ENCODE measurements at regions of chr2 and their contacts with region 1.

Region 1: GRCh38 chr2:43484323-43484930 is 111.4 kb downstream of the THADA start:
- DNase-seq: no peak
- CTCF ChIP-seq: peak; percentile 52

Region 2: GRCh38 chr2:42974721-42975717 is 509.4 kb before region 1 on chr2:
- in situ Hi-C with region 1: loop called (anchors 10 kb)
- DNase-seq: peak; percentile 53
- CTCF ChIP-seq: peak; percentile 86

Region 3: DNA sequence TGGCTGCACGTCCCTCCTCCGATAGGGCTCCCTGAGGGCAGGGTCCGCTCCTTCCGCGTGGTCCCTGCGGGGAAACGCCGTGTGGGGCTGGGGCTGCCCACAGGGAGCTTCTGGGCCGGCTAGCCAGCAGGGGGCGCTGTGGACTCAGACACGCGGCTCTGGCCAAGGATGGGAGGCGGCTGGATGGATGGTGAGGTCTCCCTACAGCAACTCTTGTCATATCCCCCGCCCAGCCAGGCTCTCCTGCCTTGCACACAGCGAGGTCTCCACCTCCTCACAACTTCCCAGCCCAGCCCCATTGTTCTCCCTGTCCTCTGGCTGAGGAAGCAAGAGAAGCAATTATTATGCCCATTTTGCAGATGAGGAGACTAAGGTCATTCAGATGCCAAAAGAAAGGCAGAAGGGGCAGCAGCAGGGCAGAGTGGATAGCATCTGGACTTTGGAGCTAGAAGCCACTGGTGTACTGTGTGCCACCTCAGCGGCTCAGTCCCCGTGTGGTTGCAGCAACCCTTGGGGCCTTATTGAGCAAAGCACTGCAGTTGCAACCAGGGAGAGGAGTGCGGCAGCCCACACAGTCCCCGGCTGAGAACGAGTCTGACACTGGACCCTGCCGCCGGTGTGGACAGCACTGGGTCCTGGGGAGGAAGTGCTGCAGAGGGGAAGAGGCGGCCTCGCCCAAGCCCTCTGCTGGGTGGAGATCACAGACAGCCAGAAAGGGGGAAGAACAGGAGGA is 357.1 kb before region 1 on chr2:
- in situ Hi-C with region 1: loop called (anchors 10 kb)
- DNase-seq: peak; percentile 81
- CTCF ChIP-seq: peak; percentile 92

Region 4: DNA sequence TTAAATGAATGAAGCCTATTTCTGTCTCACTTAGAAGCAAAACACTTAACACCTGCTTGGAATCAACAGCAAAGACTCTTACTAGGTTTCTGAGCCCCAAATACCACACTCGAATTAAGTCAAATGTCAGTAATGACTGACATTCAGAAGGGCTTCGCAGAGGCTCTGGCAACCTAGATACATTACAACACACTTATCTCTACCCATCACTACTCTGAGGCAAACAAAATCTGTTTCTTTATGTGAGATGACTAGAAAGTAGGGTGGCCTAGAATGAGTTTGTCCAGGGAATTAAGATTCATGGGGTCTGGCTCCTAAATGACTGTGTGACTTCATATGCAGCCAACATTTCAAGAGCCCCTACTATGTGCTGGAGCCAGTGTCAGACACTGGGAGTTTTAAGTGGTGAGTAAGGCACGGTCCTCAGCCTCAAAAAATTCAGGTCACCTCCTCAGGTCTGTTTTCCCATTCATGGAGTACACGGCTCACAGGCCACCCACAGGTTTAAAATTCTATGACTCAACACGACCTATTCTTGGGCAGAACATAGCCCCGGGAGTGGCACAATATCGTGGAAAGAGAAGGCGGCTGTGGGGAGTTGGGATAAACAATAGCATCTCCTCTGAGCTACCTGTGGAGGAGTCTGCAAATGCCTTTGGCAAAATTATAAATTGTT is 107.8 kb before region 1 on chr2:
- in situ Hi-C with region 1: no loop called
- DNase-seq: no peak
- CTCF ChIP-seq: no peak

Region 5: GRCh38 chr2:43818761-43819160 is 334.3 kb after region 1 on chr2:
- in situ Hi-C with region 1: no loop called
- DNase-seq: no peak
- CTCF ChIP-seq: no peak